Activated T-helper 2 cell treated with anti-CD3 and anti-CD28 coated beads, Interferon-gamma antibody, Interleukin-2, Interleukin-4, amounts not matched to agents 10 μg/mL and 5 μg/mL and 100 μg/mL, durations not matched to agents 14 hours and 24 hours and 36 hours (primary cell): ENCODE measurements at regions of chr1 and their contacts with region 1.

Region 1: DNA sequence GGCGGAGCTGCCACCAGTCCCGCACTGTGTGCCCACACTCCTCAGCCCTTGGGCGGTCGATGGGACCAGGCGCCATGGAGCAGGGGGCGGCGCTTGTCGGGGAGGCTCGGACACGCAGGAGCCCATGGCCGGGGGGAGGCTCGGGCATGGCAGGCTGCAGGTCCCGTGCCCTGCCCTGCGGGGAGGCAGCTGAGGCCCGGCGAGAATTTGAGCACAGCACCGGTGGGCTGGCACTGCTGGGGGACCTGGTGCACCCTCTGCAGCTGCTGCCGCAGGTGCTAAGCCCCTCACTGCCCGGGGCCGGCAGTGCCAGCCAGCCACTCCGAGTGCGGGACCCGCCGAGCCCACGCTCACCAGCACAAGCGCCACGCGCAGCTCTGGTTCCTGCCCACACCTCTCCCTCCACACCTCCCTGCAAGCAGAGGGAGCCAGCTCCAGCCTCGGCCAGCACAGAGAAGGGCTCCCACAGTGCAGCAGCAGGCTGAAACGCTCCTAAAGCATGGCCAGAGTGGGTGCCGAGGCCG is 267.7 kb downstream of the RYR2 start:
- DNase-seq: no peak
- H3K4me3 Mint-ChIP-seq: no peak overlapping the region
- H3K27ac Mint-ChIP-seq: no peak overlapping the region
- H3K4me1 Mint-ChIP-seq: peaks cover 9% of the 10 kb centered on the region
- H3K27me3 Mint-ChIP-seq: peaks cover 3% of the 10 kb centered on the region

Region 2: DNA sequence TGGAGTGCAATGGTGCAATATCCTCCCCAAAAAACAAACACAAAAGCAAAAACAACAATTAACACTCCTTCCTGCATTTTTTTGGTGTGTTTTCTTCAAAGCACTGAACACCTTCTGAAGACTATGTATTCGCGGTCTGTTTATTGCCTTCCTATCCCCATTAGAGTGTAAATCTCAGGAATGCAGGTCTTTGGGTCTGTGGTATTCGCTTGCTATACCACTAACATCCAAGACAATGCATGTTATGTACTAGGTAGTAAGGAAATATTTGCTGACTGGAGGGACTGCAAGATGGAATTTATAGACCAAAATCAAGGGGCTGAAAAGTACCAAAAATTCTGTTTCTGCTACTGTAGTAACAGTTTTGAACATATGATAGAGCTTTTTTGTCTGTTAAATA is 31.7 kb after region 1 on chr1:
- intact Hi-C with region 1: loop called (anchors 5 kb)
- DNase-seq: no peak
- H3K4me3 Mint-ChIP-seq: no peak overlapping the region
- H3K27ac Mint-ChIP-seq: no peak overlapping the region
- H3K4me1 Mint-ChIP-seq: peaks cover 3% of the 10 kb centered on the region
- H3K27me3 Mint-ChIP-seq: no peaks in the 10 kb centered on the region